Activated naive CD4-positive, alpha-beta T cell treated with anti-CD3 and anti-CD28 coated beads for 36 hours (primary cell): ENCODE measurements at regions of chr11 and their contacts with region 1.

Region 1: DNA sequence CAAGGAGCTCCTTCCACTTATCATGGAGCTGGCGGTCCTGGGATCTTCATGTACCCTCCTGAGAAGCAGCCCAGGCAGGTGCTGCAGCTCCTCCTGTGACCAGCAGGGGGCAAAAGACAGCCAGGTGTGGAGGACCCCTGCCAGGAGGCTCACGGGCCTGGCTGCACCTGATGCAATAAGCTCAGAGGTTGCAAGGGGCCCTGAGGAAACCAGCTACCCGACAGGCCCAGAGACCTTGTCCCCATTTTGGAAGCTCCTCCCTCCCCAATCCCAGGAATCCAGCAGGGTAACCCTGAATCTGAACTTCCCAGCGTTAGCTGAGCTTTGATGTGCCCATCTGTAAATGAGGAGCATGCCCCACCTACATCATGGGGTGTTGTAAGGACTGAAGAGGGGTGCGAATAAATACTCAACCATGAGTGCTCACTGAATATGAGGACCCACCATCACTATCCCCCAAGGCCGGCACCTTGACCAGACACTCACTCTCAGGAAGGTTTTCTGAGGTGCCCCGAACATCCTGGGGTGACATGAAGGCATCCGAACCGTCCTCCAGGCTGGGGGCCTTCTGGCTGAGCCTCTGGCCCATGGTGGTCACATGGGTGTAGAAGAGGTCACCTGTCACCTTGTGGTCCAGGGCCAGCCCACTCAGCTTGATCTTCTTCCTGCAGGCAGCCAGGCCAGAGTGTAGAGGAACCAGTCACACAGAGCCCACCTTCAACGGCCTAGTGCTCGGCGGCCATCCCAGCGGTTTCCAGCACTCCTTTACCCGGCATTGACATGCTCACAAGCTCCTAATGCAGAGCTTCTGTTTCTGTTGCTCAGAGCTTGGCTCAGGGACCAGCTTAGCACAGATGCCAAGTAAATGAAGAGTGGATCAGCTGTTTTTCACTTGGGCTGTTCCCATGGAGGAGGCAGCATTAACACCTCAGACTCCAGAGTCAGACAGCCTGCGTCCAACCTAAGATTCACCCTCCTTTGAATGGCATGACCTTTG is 21.7 kb downstream of the SLC43A1 start:
- DNase-seq: peak; percentile 93
- H3K4me3 Mint-ChIP-seq: no peak overlapping the region
- H3K27ac Mint-ChIP-seq: peak overlapping the region; percentile 93
- H3K4me1 Mint-ChIP-seq: peaks cover 12% of the 10 kb centered on the region
- H3K27me3 Mint-ChIP-seq: no peaks in the 10 kb centered on the region

Region 2: DNA sequence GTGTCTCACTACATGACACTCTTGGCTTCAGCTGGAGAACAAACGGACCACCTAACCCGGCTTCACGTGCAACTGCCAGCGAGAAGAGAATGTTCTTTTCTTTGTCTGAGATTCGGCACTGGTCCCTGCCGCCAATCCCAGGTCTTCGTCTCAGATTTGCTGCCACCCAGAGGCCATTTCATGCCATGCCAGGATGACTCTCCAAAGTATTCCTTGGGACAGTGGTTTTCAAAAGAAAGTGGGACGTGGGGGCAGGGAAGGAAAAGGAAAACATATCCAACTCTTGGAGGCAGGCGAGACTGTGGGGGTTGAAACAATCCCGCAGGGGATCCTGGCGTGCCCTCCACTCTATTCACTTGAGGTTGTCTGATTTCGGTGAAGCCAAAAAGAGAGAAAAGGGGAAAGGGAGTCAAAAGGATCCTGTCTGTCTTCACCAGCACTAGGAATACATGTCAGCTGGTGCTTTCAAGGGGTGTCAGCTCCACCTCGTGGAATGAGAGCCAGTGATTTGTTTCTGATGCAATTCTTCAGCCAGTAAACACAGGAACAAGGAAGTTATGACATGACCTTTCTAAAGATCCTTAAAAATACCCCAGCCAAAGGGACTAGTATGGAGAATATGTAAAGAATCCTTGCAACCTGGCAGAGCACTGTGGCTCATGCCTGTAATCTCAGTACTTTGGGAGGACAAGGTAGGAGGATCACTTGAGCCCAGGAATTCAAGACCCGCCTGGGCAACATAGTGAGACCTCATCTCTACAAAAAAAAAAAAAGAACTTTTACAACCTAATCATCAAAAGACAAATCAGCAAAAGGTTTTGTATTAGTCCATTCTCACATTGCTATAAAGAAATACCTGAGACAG is 215.7 kb before region 1 on chr11:
- CTCF ChIA-PET with region 1: no interaction called
- intact Hi-C with region 1: no loop called
- DNase-seq: peak; percentile 60
- H3K4me3 Mint-ChIP-seq: no peak overlapping the region
- H3K27ac Mint-ChIP-seq: no peak overlapping the region
- H3K4me1 Mint-ChIP-seq: peaks cover 5% of the 10 kb centered on the region
- H3K27me3 Mint-ChIP-seq: peaks cover 23% of the 10 kb centered on the region

Region 3: DNA sequence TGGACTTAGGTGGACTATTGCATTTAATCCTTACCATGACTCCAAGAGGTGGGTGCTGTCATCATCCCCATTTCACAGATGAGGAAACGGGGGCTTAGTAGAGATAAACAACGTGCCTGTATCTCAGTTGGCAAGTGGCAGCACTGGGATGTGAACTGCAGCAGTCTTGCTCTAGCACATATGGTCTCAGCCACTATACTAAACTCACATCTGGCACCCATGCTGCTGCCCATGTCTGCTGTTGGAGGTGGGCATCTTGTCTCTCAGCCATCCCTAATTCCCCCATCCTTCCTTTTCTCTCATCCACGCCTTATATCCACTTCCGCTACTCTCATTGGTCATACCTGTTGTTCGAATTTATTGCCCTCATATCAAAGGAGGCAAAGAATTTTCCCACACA is 116.7 kb before region 1 on chr11:
- CTCF ChIA-PET with region 1: no interaction called
- intact Hi-C with region 1: no loop called
- DNase-seq: no peak
- H3K4me3 Mint-ChIP-seq: no peak overlapping the region
- H3K27ac Mint-ChIP-seq: no peak overlapping the region
- H3K4me1 Mint-ChIP-seq: no peaks in the 10 kb centered on the region
- H3K27me3 Mint-ChIP-seq: peaks cover 11% of the 10 kb centered on the region

Region 4: GRCh38 chr11:57474017-57474802 is 19.6 kb before region 1 on chr11:
- CTCF ChIA-PET with region 1: interaction called, 13 read pairs
- intact Hi-C with region 1: no loop called
- DNase-seq: peak; percentile 68
- H3K4me3 Mint-ChIP-seq: no peak overlapping the region
- H3K27ac Mint-ChIP-seq: no peak overlapping the region
- H3K4me1 Mint-ChIP-seq: peaks cover 27% of the 10 kb centered on the region
- H3K27me3 Mint-ChIP-seq: peaks cover 8% of the 10 kb centered on the region

Region 5: DNA sequence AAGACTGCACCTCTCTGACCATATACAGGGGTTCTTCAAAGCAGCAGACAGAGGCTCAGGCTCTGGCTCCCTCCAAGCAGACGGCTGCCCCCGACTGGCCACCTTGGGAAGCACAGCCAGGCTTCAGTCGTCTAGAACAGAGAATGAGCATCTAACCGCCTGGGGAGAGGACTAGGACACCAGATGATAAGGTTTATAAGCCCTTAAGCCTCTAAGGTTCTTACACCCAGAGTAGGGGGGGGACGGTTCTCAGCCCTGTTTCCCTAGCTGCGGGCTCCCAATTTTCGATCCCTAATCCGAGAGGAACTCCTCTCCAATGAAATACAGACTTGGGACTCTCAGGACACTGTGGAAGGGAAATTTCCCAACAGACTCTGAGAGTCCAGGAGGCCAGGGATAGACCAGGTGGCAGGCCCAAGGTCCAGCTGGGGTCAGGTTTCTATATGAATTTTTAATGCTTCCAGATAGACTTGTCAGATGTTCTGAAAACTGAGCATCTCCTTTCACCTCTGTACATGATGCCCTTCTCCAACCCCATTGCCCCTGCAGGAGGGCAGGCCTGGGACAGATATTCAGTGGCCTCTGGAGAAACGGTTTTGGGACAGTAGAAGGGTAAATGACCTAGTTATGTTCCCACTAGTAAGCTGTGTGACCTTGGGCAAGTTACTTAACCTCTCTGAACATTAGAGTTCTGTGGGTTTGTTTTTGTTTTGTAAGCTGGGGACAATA is 13.2 kb before region 1 on chr11:
- CTCF ChIA-PET with region 1: interaction called, 71 read pairs
- intact Hi-C with region 1: no loop called
- DNase-seq: peak; percentile 87
- H3K4me3 Mint-ChIP-seq: no peak overlapping the region
- H3K27ac Mint-ChIP-seq: no peak overlapping the region
- H3K4me1 Mint-ChIP-seq: peaks cover 22% of the 10 kb centered on the region
- H3K27me3 Mint-ChIP-seq: peaks cover 16% of the 10 kb centered on the region

Region 6: DNA sequence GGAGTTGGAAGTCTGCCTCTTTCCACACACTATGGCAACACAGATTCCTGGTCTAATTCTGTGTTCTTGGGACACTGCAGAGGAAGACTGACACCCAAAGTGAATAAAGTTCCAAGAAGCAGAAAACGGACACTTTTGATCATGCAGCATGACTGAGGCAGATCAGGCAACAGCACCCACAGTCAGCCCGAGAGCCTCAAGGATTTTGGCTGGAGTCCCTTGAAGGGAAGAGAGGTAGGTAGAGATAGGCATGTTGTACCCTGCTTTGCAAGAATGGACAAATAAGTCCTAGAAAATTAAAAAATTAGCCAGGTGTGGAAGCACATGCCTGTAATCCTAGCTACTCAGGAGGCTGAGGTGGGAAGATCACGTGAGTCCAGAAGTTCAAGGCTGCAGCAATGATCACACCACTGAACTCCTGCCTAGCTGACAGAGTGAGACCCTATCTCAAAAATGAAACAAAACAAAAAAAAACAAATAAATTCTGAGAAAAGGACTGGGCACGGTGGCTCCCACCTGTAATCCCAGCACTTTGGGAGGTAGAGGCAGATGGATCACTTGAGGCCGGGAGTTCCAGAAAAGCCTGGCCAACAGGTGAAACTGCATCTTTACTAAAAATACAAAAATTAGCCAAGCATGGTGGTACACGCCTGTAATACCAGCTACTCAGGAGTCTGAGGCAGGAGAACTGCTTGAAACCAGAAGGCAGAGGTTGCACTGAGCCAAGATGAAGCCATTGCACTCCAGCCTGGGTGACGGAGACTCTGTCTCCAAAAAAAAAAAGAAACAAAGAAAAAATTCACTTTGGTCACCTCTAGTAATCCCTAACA is 14.8 kb after region 1 on chr11:
- CTCF ChIA-PET with region 1: interaction called, 144 read pairs
- intact Hi-C with region 1: no loop called
- DNase-seq: no peak
- H3K4me3 Mint-ChIP-seq: no peak overlapping the region
- H3K27ac Mint-ChIP-seq: no peak overlapping the region
- H3K4me1 Mint-ChIP-seq: peaks cover 24% of the 10 kb centered on the region
- H3K27me3 Mint-ChIP-seq: no peaks in the 10 kb centered on the region

Region 7: GRCh38 chr11:57515332-57516060 is 21.7 kb after region 1 on chr11 and contains the start of gene SLC43A1:
- CTCF ChIA-PET with region 1: interaction called, 144 read pairs
- intact Hi-C with region 1: loop called (anchors 1 kb)
- DNase-seq: peak; percentile 46
- H3K4me3 Mint-ChIP-seq: peak within 1 kb of the TSS; percentile 98
- H3K27ac Mint-ChIP-seq: peak within 1 kb of the TSS; percentile 91
- H3K4me1 Mint-ChIP-seq: peaks cover 30% of the 10 kb centered on the region
- H3K27me3 Mint-ChIP-seq: no peaks in the 10 kb centered on the region
- total RNA-seq, gene SLC43A1: 26.5 to 29.7 TPM

Region 8: GRCh38 chr11:57521116-57521515 is 27.3 kb after region 1 on chr11:
- CTCF ChIA-PET with region 1: interaction called, 270 read pairs
- intact Hi-C with region 1: no loop called
- DNase-seq: no peak
- H3K4me3 Mint-ChIP-seq: no peak overlapping the region
- H3K27ac Mint-ChIP-seq: no peak overlapping the region
- H3K4me1 Mint-ChIP-seq: peaks cover 1% of the 10 kb centered on the region
- H3K27me3 Mint-ChIP-seq: no peaks in the 10 kb centered on the region

Region 9: DNA sequence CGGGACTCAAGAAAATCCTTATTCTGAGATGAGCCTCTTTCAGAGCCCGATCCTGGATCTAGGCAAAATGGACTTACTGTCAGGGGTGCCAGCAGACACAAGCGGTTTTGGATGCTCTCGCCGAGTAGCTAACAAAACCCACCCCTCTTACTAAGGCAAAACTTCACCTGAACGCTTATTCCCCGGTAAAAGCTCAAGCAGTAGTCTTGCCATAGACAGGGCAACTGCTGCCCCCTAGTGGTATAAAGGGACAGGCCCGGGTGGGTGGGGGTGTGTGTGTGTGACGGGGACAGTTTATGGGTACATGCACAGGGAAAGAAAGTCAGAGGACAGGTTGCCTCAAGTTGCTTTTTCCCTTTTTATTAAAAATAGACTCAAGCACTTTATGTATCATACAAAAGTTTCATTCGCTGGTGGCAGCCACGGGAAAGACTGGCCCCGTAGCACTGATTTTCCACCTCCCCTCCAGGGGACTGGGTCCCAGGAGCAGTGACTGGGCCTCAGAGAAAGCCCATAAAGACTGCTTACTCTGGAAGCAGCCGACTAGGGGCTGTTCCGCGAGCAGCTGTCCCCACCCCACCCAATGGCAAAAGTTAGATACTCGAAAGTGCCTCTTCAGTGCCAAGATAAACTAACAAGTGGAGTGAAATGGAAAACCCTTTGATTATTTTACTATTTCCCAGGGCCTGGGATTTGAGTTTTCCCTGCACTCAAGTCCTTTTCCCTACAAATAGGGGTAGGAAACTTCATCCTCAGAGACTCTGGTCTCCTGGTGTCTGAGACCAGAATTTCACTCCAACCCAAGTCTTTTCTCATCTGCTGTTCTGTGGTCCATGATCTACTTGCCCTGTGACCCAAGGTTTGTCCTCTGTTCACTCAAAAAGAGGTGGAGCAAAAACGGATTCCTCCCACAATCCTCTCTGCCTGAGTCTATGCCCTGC is 151.2 kb after region 1 on chr11:
- CTCF ChIA-PET with region 1: interaction called, 127 read pairs
- intact Hi-C with region 1: loop called (anchors 1 kb)
- DNase-seq: peak; percentile 94
- H3K4me3 Mint-ChIP-seq: no peak overlapping the region
- H3K27ac Mint-ChIP-seq: no peak overlapping the region
- H3K4me1 Mint-ChIP-seq: peaks cover 35% of the 10 kb centered on the region
- H3K27me3 Mint-ChIP-seq: peaks cover 39% of the 10 kb centered on the region